WTC11 (cell line): ENCODE measurements at regions of chr17 and their contacts with region 1.

Region 1: DNA sequence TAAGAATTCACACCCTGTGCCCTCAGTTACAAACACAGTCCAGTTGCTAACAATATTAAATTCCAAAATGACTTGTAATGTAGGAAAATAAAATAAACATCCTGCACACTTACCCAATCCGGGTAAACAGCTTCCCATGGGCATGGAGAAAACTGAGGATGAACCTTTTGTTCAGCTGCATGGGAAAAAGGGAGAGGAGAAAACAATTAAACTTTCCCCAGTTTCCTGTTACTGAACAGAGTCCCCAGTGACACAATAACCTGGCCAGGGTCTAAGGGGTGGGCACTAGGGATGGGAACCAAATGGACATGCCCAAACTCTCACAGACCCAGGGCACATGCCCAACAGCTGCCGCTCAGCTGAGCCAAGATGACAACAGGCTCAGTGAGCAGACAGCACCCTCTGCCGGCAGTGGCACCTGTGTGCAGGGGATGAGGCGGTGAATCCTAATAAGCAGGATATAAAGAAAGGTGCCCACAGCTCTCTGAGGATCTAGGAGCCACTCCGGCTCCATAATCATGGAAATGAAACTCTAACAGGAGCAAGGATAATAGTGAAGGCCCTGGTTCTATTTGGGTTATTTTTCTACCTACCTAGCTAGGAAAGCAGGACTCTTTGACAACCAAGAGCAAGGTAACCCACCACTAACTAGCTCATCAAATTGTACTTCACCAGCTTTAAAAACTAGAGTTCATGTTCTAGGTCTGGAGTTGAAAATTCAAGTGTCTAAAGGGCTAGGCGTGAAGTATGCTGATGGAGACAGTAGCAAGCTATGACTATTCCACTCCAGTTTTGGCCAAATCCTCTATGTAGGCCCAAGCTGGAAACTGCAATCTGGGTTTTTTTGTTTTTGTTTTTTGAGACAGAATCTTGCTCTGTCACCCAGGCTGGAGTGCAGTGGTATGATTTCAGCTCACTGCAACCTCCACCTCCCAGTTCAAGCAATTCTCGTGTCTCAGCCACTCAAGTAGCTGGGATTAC is 58.8 kb downstream of the SMG6 start:
- DNase-seq: peak; percentile 89
- ATAC-seq: peak; percentile 98
- H3K4me3 Mint-ChIP-seq: no peak overlapping the region
- H3K27ac Mint-ChIP-seq: no peak overlapping the region
- H3K4me1 Mint-ChIP-seq: no peaks in the 10 kb centered on the region
- H3K27me3 Mint-ChIP-seq: no peaks in the 10 kb centered on the region
- CTCF ChIP-seq: peak; percentile 94

Region 2: DNA sequence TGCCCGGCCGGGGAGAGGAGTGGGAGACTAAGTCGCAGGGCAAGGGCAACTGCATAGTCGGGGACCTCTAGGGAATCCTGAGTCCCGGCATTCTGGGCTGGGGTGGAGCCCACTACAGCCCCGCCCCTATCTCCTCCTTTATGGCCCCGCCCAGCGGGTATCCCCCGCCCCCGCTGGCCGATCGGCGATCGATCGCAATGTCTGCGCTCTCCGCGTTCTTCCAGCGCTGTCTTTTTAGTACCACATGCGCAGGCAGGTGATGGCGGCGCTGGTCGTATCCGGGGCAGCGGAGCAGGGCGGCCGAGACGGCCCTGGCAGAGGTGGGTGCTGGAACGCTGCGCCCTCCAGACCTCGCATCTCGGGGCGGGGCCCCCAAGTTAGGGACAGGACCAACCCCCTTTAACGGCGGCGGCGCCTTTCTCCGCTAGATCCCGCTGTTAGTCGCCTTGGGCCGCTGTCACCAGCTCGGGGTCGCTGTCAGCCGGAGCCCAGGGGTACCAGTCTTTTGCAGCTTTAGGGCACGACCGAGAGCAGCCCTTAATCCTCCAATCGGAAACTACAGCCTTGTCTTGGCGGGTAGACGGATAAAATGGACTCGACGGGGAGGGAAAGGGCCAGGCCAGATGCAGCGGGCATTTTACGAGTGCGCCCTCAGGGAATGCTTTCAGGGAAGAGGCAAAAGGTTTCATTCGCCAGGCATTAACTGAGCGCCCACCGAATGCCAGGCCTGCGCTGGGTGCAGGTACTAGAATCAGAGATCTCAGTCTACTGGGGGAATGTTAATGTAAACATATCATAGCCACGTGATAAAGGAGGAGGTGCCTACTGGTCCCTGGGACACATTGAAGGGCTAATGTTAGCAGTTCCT is 214.7 kb before region 1 on chr17 and contains the start of gene DPH1:
- CTCF ChIA-PET with region 1: no interaction called
- POLR2A ChIA-PET with region 1: no interaction called
- DNase-seq: peak; percentile 95
- ATAC-seq: peak; percentile 88
- H3K4me3 Mint-ChIP-seq: peak within 1 kb of the TSS; percentile 97
- H3K27ac Mint-ChIP-seq: peak within 1 kb of the TSS; percentile 57
- H3K4me1 Mint-ChIP-seq: peaks cover 7% of the 10 kb centered on the region
- H3K27me3 Mint-ChIP-seq: peaks cover 47% of the 10 kb centered on the region
- CTCF ChIP-seq: no peak
- total RNA-seq, gene DPH1: 29.5 to 43.2 TPM (median 33.0 TPM) in 3 replicates

Region 3: DNA sequence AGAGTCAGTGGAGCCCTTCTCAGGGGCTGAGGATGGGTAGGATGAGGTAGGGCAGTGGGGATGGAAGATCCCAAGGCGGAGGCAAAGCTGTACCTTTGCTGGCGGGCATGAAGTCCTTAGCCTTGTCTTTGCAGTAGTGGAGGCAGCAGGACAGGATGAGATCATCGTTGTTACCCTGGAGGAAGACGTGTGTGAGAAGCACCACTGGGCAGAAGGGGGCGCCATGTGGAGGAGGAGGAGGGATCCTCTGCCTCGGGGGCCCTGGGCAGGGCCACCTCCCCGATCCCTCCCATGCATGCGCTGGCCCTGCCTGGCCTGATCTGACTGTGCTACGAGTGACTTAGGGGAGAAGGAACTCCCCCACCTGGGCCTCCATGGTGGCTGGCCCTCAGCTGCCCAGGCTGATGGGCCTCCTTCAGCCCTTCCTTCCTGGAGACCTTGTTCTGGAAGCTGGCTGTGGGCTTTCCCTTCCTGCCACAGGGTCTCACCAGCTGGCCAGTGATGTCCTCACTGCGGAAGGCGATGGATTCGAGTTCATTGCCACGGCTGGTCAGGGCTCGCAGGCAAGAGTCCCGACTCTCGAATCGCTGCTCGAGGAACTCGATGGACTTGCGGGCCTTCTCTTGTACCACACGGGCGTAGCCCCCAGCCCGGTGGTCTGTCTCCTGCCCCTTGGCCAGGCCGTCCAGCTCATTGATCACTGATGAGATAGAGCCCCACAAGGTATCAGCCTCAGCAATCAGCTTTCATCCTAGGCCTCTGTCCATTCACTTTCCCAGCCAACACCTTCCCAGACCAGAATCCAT is 179.7 kb before region 1 on chr17:
- CTCF ChIA-PET with region 1: interaction called, 229 read pairs
- POLR2A ChIA-PET with region 1: no interaction called
- DNase-seq: peak; percentile 90
- ATAC-seq: peak; percentile 85
- H3K4me3 Mint-ChIP-seq: no peak overlapping the region
- H3K27ac Mint-ChIP-seq: peak overlapping the region; percentile 74; the same call in 1 of the 2 replicates
- H3K4me1 Mint-ChIP-seq: peaks cover 31% of the 10 kb centered on the region
- H3K27me3 Mint-ChIP-seq: peaks cover 13% of the 10 kb centered on the region
- CTCF ChIP-seq: peak; percentile 65

Region 4: GRCh38 chr17:2094891-2095535 is 149.8 kb before region 1 on chr17:
- CTCF ChIA-PET with region 1: interaction called, 32 read pairs
- POLR2A ChIA-PET with region 1: no interaction called
- DNase-seq: peak; percentile 35
- ATAC-seq: peak; percentile 46
- H3K4me3 Mint-ChIP-seq: no peak overlapping the region
- H3K27ac Mint-ChIP-seq: peak overlapping the region; percentile 77
- H3K4me1 Mint-ChIP-seq: peaks cover 30% of the 10 kb centered on the region
- H3K27me3 Mint-ChIP-seq: no peaks in the 10 kb centered on the region
- CTCF ChIP-seq: no peak

Region 5: DNA sequence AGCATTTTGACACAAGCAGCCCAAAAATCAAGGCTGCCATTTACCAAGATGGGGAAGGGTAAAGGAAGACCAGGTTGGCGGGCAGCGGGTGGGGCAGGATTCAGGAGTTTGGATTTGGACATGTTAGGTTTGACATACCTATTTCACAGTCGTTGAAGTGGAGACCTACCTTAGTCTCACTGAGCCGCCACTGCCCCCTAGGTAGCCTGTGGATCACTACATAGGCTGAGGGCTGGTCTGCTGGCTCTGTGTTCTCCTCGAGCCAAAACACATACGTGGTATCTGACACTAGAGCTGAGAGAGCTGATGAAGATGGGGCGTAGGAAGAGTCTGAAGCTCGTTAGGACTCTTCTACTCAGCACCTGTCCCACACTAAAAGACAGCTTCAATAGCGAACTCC is 74.8 kb before region 1 on chr17:
- CTCF ChIA-PET with region 1: interaction called, 18 read pairs
- POLR2A ChIA-PET with region 1: interaction called, 4 read pairs
- DNase-seq: peak; percentile 68
- ATAC-seq: peak; percentile 91
- H3K4me3 Mint-ChIP-seq: no peak overlapping the region
- H3K27ac Mint-ChIP-seq: no peak overlapping the region
- H3K4me1 Mint-ChIP-seq: peaks cover 10% of the 10 kb centered on the region
- H3K27me3 Mint-ChIP-seq: no peaks in the 10 kb centered on the region
- CTCF ChIP-seq: peak; percentile 48; the same call in 1 of the 2 replicates

Region 6: GRCh38 chr17:2215616-2216364 is 29.0 kb before region 1 on chr17:
- CTCF ChIA-PET with region 1: interaction called, 12 read pairs
- POLR2A ChIA-PET with region 1: no interaction called
- DNase-seq: peak; percentile 33
- ATAC-seq: peak; percentile 85
- H3K4me3 Mint-ChIP-seq: peak overlapping the region; percentile 25; the same call in 1 of the 2 replicates
- H3K27ac Mint-ChIP-seq: peak overlapping the region; percentile 51
- H3K4me1 Mint-ChIP-seq: peaks cover 33% of the 10 kb centered on the region
- H3K27me3 Mint-ChIP-seq: no peaks in the 10 kb centered on the region
- CTCF ChIP-seq: no peak

Region 7: DNA sequence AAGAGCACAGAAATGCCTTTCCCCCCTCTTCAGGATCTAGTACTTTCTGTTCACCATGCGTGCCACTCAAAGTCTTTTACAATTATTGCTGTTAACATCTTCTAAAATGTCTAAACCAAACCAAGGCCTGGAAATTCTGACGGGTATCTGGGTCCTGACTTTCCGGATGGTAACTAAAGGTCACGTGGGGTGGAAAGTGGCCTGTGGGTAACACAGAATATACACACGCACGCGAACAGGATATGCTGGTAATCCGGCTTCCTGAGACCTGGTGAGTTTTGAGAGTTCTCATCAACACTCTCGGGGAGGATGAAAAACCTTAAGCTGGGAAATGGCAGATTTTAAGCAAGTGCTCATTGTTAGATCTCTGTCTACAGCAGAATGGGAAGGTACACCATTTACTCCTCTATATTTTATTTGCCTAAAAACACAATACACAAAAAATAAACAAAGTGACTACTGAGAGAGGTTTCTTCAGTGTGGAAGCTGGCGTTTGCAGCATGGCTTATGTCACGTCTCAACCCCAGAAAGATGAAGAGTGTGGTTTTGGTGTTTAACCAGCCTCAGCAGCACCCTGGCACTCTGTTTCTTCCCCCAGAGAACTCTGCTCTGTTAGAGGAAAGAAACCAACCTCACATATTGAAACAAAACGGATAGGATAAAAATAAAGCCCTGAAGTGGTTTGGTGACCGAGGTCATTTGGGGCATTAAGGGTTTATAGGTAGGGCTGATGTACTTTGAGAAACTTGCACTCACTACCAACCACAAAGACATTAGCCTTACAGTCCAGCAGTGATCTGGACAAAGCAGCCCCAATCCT is 21.4 kb after region 1 on chr17:
- CTCF ChIA-PET with region 1: interaction called, 15 read pairs
- POLR2A ChIA-PET with region 1: no interaction called
- DNase-seq: no peak
- ATAC-seq: no peak
- H3K4me3 Mint-ChIP-seq: no peak overlapping the region
- H3K27ac Mint-ChIP-seq: peak overlapping the region; percentile 16; the same call in 1 of the 2 replicates
- H3K4me1 Mint-ChIP-seq: no peaks in the 10 kb centered on the region
- H3K27me3 Mint-ChIP-seq: no peaks in the 10 kb centered on the region
- CTCF ChIP-seq: no peak